Upper lobe of right lung (tissue), 1 donor: ENCODE measurements at regions of chr12 and their contacts with region 1.

Region 1: DNA sequence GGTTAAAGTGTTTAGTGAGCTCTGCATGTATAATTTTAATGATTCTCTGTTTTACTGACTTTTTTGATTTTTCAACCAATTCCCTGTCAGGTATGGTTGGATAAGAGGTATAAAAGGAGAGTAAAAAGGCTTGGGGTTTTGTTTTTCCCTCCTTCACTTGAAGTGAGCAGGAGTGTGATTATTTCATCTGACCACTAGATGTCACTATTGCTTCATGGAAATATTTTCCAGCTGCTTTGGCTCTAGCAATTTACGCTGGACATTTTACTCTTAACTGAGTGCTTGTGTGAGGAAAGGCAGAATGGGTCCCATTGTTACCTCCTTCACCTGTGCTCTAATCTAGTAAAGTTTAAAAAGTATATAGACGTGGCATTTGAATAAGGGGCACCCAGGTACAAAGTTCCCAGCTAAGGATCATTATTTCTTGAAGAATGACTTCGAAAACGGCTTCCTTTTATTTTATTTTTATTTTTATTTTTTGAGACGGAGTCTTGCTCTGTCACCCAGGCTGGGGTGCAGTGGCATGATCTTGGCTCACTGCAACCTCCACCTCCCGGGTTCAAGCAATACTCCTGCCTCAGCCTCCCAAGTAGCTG is 66.5 kb downstream of the TBC1D30 start:
- DNase-seq: no peak
- ATAC-seq: peak; percentile 90
- H3K4me3 ChIP-seq: no peak overlapping the region
- H3K27ac ChIP-seq: no peak overlapping the region
- H3K4me1 ChIP-seq: peaks cover 3% of the 10 kb centered on the region
- H3K27me3 ChIP-seq: no peaks in the 10 kb centered on the region
- CTCF ChIP-seq: peak; percentile 79

Region 2: GRCh38 chr12:65121049-65121955 is 230.3 kb after region 1 on chr12 and contains the start of gene WIF1:
- intact Hi-C with region 1: loop called (anchors 10 kb)
- DNase-seq: peak; percentile 91
- ATAC-seq: peak; percentile 93
- H3K4me3 ChIP-seq: peak within 1 kb of the TSS; percentile 45
- H3K27ac ChIP-seq: no peak within 1 kb of the TSS
- H3K4me1 ChIP-seq: peaks cover 6% of the 10 kb centered on the region
- H3K27me3 ChIP-seq: peaks cover 57% of the 10 kb centered on the region
- CTCF ChIP-seq: peak; percentile 45
- total RNA-seq, gene WIF1: 171 TPM

Region 3: GRCh38 chr12:65229441-65229840 is 338.5 kb after region 1 on chr12:
- intact Hi-C with region 1: loop called (anchors 10 kb)
- DNase-seq: no peak
- ATAC-seq: no peak
- H3K4me3 ChIP-seq: no peak overlapping the region
- H3K27ac ChIP-seq: no peak overlapping the region
- H3K4me1 ChIP-seq: no peaks in the 10 kb centered on the region
- H3K27me3 ChIP-seq: no peaks in the 10 kb centered on the region
- CTCF ChIP-seq: no peak

Region 4: DNA sequence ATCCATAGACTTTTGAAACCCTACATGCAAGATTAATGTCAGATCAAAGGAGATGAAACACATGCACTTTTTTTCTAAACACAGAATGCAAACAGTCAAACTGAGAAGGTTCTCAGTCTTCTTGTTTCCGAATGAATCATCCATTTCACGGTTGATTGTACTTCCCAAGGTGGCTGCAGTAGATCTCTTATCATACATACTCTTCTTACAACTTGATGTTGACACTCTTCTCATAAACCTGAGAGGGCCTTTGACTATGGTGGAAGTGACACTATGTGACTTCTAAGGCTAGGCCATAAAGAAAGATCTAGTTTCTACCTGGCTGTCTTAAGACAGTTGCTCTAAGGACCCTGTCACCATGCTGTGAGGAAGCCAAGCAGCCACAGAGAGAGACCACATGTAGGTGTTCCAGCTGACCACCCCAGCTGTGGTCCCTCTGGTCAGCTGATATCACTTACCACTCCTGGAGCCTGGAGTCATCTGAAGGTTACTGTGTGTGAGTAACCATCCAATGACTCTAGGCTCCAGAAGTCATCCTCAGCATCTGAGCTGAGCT is 866.1 kb after region 1 on chr12:
- intact Hi-C with region 1: no loop called
- DNase-seq: no peak
- ATAC-seq: no peak
- H3K4me3 ChIP-seq: no peak overlapping the region
- H3K27ac ChIP-seq: no peak overlapping the region
- H3K4me1 ChIP-seq: no peaks in the 10 kb centered on the region
- H3K27me3 ChIP-seq: peaks cover 6% of the 10 kb centered on the region
- CTCF ChIP-seq: no peak